ENCODE measurements at regions of chr5 and their contacts with region 1.

Region 1: GRCh38 chr5:45038366-45038987 is 229.7 kb downstream of the MRPS30 start:
- DNase-seq: peak; percentile 22
- ATAC-seq: no peak
- H3K4me3 ChIP-seq: no peak overlapping the region
- H3K27ac ChIP-seq: no peak overlapping the region
- H3K4me1 ChIP-seq: no peaks in the 10 kb centered on the region
- H3K27me3 ChIP-seq: no peaks in the 10 kb centered on the region
- CTCF ChIP-seq: peak; percentile 68; the same call in 1 of the 2 replicates

Region 2: DNA sequence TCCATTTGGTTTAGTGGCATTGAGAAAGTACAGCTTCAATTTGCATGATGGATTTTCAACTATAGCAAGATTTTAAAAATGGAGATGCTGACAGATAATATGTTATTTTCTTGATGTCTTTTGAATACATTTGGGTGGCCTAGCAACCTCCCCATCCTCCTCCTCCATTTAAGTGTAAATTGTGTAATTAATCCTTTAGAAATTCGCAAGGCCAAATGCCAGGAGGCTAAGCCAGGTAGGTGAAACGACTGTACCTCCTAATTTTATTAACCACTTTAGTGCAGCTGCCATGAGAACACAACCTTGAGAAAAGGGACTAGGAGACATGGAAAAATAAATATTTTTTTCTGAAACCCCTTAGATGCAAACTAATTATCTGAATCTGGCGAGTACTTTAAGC is 19.1 kb after region 1 on chr5:
- CTCF ChIA-PET with region 1: no interaction called
- POLR2A ChIA-PET with region 1: no interaction called
- in situ Hi-C with region 1: no loop called
- intact Hi-C with region 1: no loop called
- DNase-seq: no peak
- ATAC-seq: no peak
- H3K4me3 ChIP-seq: no peak overlapping the region
- H3K27ac ChIP-seq: no peak overlapping the region
- H3K4me1 ChIP-seq: no peaks in the 10 kb centered on the region
- H3K27me3 ChIP-seq: no peaks in the 10 kb centered on the region
- CTCF ChIP-seq: no peak

Region 3: DNA sequence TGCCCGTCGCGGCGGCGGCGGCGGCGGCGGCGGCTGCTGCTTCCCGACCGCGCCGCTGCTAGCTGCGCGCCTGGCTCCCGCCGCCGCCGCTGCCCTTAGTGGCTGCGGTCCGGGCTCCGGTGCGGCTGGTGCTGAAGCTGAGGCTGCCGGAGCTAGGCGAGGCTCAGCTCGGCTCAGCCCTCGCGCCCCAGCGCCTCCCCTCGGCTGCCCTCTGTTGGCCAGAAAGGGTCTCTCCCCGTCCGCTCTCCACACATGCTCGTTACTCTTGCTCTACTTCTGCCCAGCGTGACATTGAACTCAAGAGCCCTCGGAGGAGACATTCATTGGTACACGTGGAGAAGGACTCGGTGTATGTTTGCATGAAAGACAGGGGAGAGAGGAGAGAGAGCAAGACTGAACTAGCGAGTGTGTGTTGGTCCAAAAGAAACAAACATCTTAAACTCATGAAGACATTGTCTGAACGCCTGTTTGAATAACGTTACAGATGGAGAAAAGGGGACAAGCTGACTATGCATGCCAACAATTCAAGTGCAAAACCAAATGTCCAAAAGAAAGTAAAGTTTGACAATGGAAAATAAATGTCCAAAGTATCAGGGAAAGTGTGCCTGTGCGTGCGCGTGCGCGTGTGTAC is 657.8 kb after region 1 on chr5 and contains the start of gene HCN1:
- CTCF ChIA-PET with region 1: interaction called, 3 read pairs
- POLR2A ChIA-PET with region 1: no interaction called
- in situ Hi-C with region 1: no loop called
- intact Hi-C with region 1: loop called (anchors 5 kb)
- DNase-seq: peak; percentile 17
- ATAC-seq: peak; percentile 100
- H3K4me3 ChIP-seq: peak within 1 kb of the TSS; percentile 24 to 44
- H3K27ac ChIP-seq: no peak within 1 kb of the TSS
- H3K4me1 ChIP-seq: no peaks in the 10 kb centered on the region
- H3K27me3 ChIP-seq: peaks cover 6% of the 10 kb centered on the region
- CTCF ChIP-seq: peak; percentile 91
- total RNA-seq, gene HCN1: 0.36 TPM

Measured in Panc1 (cell line).